ENCODE measurements at regions of chr19 and their contacts with region 1.

Region 1: GRCh38 chr19:12965017-12965811 is 4.2 kb upstream of the DAND5 start:
- H3K4me3 ChIP-seq: peak overlapping the region; percentile 40
- H3K27ac ChIP-seq: peak overlapping the region; percentile 60; the same call in 1 of the 2 replicates
- H3K4me1 ChIP-seq: no peaks in the 10 kb centered on the region
- CTCF ChIP-seq: peak; percentile 100

Region 2: GRCh38 chr19:12938234-12939025 is 26.8 kb before region 1 on chr19 and contains the start of gene CALR:
- CTCF ChIA-PET with region 1: interaction called, 11 read pairs
- POLR2A ChIA-PET with region 1: interaction called, 7 read pairs
- H3K4me3 ChIP-seq: peak within 1 kb of the TSS; percentile 97
- H3K27ac ChIP-seq: peak within 1 kb of the TSS; percentile 82
- H3K4me1 ChIP-seq: peaks cover 9% of the 10 kb centered on the region
- CTCF ChIP-seq: peak; percentile 90

Region 3: DNA sequence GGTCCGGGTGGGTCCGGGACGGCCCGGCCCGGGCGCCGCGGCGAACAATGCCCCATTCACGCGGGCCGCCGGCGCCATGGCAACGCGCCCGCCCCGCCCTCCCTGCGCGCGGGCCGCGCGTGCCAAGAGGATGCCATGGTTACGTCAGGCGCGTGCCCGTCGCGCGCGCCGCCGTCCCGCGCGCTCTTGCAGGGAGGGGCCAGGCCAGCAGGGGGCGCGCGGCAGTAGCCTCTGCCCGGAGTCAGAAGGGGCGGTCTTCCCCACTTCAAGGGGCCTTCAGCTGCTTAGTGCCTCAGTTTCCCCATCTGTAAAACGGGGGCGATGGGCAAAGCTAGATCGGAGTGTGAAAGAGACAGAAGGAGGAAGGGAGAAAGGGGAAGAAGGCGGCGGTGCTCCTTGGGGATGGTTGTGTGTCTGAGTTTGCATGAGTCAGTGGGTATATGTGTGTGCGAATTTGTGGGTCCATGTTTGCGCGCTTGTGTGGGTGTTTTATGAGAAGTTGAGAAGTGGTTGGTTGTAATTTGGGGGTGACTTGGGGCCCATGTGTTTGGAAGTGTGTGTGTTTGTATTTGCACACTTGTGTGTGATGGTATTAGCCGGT is 18.4 kb after region 1 on chr19:
- CTCF ChIA-PET with region 1: interaction called, 13 read pairs
- POLR2A ChIA-PET with region 1: no interaction called
- H3K4me3 ChIP-seq: peak overlapping the region; percentile 16
- H3K27ac ChIP-seq: no peak overlapping the region
- H3K4me1 ChIP-seq: no peaks in the 10 kb centered on the region
- CTCF ChIP-seq: peak; percentile 96

Region 4: DNA sequence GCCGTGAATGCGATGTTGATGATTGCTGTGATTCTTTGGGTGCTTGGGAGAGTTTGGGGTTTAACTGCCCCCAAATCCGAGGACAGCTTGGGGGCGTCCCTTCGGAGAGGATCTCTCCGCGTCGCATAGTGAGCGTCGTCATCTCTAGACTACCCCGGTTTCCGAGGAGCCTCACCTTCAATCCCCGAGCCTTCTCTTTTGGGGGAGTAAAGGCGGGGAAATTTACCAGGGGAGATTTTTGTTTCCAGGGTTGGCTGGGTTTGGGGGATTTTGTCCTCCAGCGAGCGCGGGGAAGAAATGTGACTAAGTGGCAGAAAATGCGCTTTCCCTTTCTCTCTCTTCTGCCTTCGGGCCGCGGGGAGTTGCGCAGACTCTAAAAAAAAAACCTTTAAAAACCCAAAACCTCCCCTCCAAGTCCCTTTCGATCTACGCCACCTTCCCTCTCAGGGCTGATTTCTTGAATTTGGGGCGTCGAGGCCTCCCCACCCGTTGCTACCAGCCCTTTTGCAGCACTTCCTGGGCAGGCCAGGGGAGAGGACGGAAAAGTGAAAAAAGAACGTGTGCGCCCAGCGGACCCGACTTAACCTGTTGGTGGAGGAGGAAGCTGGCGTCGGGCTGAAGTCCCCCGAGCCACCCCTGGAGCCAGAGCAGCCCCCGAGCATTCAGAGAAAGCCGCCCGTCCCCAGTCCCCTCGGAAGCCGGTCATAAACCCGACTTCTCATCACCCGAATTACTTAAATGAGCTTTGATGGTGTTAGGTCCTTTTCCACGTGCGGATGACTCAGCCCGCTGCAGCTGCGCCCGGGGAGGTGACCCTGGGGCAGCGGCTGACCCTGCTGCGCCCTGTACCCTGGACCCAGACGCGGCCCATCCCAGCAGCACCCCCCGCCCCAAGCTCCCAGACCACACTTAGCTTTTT is 47.7 kb after region 1 on chr19:
- CTCF ChIA-PET with region 1: interaction called, 10 read pairs
- POLR2A ChIA-PET with region 1: no interaction called
- H3K4me3 ChIP-seq: no peak overlapping the region
- H3K27ac ChIP-seq: no peak overlapping the region
- H3K4me1 ChIP-seq: peaks cover 9% of the 10 kb centered on the region
- CTCF ChIP-seq: no peak

Region 5: GRCh38 chr19:13051267-13052165 is 86.3 kb after region 1 on chr19:
- CTCF ChIA-PET with region 1: interaction called, 17 read pairs
- POLR2A ChIA-PET with region 1: no interaction called
- H3K4me3 ChIP-seq: peak overlapping the region; percentile 6; the same call in 1 of the 2 replicates
- H3K27ac ChIP-seq: no peak overlapping the region; the same call in 1 of the 2 replicates
- H3K4me1 ChIP-seq: peaks cover 32% of the 10 kb centered on the region
- CTCF ChIP-seq: no peak

Region 6: GRCh38 chr19:13082192-13083007 is 117.2 kb after region 1 on chr19:
- CTCF ChIA-PET with region 1: interaction called, 16 read pairs
- POLR2A ChIA-PET with region 1: no interaction called
- H3K4me3 ChIP-seq: no peak overlapping the region
- H3K27ac ChIP-seq: no peak overlapping the region
- H3K4me1 ChIP-seq: peaks cover 14% of the 10 kb centered on the region
- CTCF ChIP-seq: peak; percentile 18; the same call in 1 of the 2 replicates

Region 7: GRCh38 chr19:13100841-13101589 is 135.8 kb after region 1 on chr19:
- CTCF ChIA-PET with region 1: interaction called, 46 read pairs
- POLR2A ChIA-PET with region 1: interaction called, 3 read pairs
- H3K4me3 ChIP-seq: no peak overlapping the region
- H3K27ac ChIP-seq: no peak overlapping the region
- H3K4me1 ChIP-seq: no peaks in the 10 kb centered on the region
- CTCF ChIP-seq: no peak